ENCODE measurements at regions of chr4 and their contacts with region 1.

Region 1: DNA sequence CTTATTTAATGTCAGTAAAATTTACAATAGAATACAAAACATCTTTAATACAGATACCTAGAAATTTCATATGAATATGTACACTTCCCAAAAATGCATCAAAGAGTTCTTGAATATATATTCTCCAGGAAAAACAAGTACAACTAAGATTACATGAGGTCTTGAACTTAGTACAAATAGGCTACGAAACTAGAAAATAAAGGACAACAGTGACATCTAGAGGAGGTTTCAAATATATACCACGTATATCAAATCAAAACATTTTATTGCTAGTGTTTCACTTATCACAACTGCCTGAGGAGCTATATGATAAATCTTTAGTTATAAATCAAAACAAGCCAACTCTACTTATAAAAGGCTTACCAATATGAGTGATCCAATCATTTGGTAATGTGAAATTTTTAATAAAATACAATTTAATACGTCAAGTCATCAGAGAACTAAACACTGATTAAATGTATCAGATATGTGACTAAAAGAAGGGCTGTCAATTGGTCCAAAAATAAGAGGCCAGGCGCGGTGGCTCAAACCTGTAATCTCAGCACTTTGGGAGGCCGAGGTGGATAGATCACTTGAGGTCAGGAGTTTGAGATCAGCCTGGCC is 36.6 kb downstream of the ANAPC10 start:
- DNase-seq: no peak
- ATAC-seq: peak; percentile 83
- H3K4me3 ChIP-seq: no peak overlapping the region
- H3K27ac ChIP-seq: no peak overlapping the region
- H3K4me1 ChIP-seq: no peaks in the 10 kb centered on the region
- H3K27me3 ChIP-seq: no peaks in the 10 kb centered on the region
- CTCF ChIP-seq: peak in 2 of 3 experiments; percentile 25 to 58; a peak in 2 of 6 replicates
- EP300 ChIP-seq: no peak
- POLR2A ChIP-seq: no peak
- RAD21 ChIP-seq: peak; percentile 65

Region 2: GRCh38 chr4:144611846-144612245 is 449.6 kb before region 1 on chr4:
- CTCF ChIA-PET with region 1: interaction called, 18 read pairs
- POLR2A ChIA-PET with region 1: no interaction called
- RAD21 ChIA-PET with region 1: interaction called, 6 read pairs
- SMC1A ChIA-PET with region 1: interaction called, 15 read pairs
- in situ Hi-C with region 1: loop called (anchors 10 kb)
- intact Hi-C with region 1: no loop called
- DNase-seq: no peak
- ATAC-seq: peak; percentile 72
- H3K4me3 ChIP-seq: no peak overlapping the region
- H3K27ac ChIP-seq: no peak overlapping the region
- H3K4me1 ChIP-seq: no peaks in the 10 kb centered on the region
- H3K27me3 ChIP-seq: no peaks in the 10 kb centered on the region
- CTCF ChIP-seq: peak; percentile 34 to 43 (median 42); a peak in 5 of 6 replicates
- EP300 ChIP-seq: no peak
- POLR2A ChIP-seq: no peak
- RAD21 ChIP-seq: peak; percentile 49

Region 3: GRCh38 chr4:144734522-144734921 is 326.9 kb before region 1 on chr4:
- CTCF ChIA-PET with region 1: no interaction called
- POLR2A ChIA-PET with region 1: no interaction called
- RAD21 ChIA-PET with region 1: no interaction called
- SMC1A ChIA-PET with region 1: no interaction called
- in situ Hi-C with region 1: no loop called
- intact Hi-C with region 1: no loop called
- DNase-seq: no peak
- ATAC-seq: no peak
- H3K4me3 ChIP-seq: no peak overlapping the region
- H3K27ac ChIP-seq: no peak overlapping the region
- H3K4me1 ChIP-seq: no peaks in the 10 kb centered on the region
- H3K27me3 ChIP-seq: no peaks in the 10 kb centered on the region
- CTCF ChIP-seq: no peak
- EP300 ChIP-seq: no peak
- POLR2A ChIP-seq: no peak
- RAD21 ChIP-seq: no peak

Region 4: GRCh38 chr4:144787365-144788258 is 273.8 kb before region 1 on chr4:
- CTCF ChIA-PET with region 1: interaction called, 8 read pairs
- POLR2A ChIA-PET with region 1: no interaction called
- RAD21 ChIA-PET with region 1: interaction called, 9 read pairs
- SMC1A ChIA-PET with region 1: interaction called, 5 read pairs
- in situ Hi-C with region 1: no loop called
- intact Hi-C with region 1: loop called (anchors 2 kb)
- DNase-seq: no peak
- ATAC-seq: peak; percentile 89
- H3K4me3 ChIP-seq: no peak overlapping the region
- H3K27ac ChIP-seq: no peak overlapping the region
- H3K4me1 ChIP-seq: no peaks in the 10 kb centered on the region
- H3K27me3 ChIP-seq: no peaks in the 10 kb centered on the region
- CTCF ChIP-seq: peak; percentile 42 to 57 (median 49); a peak in 5 of 6 replicates
- EP300 ChIP-seq: 0 out of 4 replicates have a peak, but pooled peaks of 1 of the 2 experiments have one; percentile 40
- POLR2A ChIP-seq: no peak
- RAD21 ChIP-seq: peak; percentile 66

Region 5: DNA sequence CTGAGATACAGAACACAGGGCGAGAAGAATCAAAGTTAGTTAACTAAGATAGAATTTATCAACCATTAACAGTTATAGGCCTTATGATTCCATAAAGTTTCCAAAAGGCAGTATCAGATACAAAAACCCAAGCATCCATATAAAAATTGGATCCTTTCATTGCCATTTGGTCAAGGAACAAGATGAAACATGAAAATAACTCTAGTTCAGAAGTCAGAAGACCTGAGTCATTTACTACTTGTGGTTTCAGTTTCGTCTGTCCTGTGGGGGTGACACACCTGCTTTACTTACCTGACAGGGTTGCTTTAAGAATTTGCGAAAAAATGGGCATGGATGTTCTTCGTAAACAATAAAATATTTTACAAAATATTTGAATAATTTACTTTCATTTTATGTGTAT is 94.3 kb before region 1 on chr4:
- CTCF ChIA-PET with region 1: interaction called, 4 read pairs
- POLR2A ChIA-PET with region 1: no interaction called
- RAD21 ChIA-PET with region 1: interaction called, 16 read pairs
- SMC1A ChIA-PET with region 1: interaction called, 7 read pairs
- in situ Hi-C with region 1: no loop called
- intact Hi-C with region 1: no loop called
- DNase-seq: no peak
- ATAC-seq: peak; percentile 47
- H3K4me3 ChIP-seq: no peak overlapping the region
- H3K27ac ChIP-seq: peak overlapping the region; percentile 25; the same call in 1 of the 2 replicates
- H3K4me1 ChIP-seq: peaks cover 12% of the 10 kb centered on the region
- H3K27me3 ChIP-seq: no peaks in the 10 kb centered on the region
- CTCF ChIP-seq: no peak
- EP300 ChIP-seq: no peak
- POLR2A ChIP-seq: no peak
- RAD21 ChIP-seq: no peak

Region 6: GRCh38 chr4:145075742-145076468 is 14.5 kb after region 1 on chr4:
- CTCF ChIA-PET with region 1: interaction called, 13 read pairs
- POLR2A ChIA-PET with region 1: no interaction called
- RAD21 ChIA-PET with region 1: interaction called, 3 read pairs
- SMC1A ChIA-PET with region 1: interaction called, 4 read pairs
- in situ Hi-C with region 1: no loop called
- intact Hi-C with region 1: no loop called
- DNase-seq: no peak
- ATAC-seq: peak; percentile 84
- H3K4me3 ChIP-seq: no peak overlapping the region
- H3K27ac ChIP-seq: no peak overlapping the region
- H3K4me1 ChIP-seq: no peaks in the 10 kb centered on the region; the same call in 1 of the 2 replicates
- H3K27me3 ChIP-seq: no peaks in the 10 kb centered on the region
- CTCF ChIP-seq: no peak
- EP300 ChIP-seq: no peak
- POLR2A ChIP-seq: no peak
- RAD21 ChIP-seq: no peak